HCT116 (cell line): ENCODE measurements at regions of chr9 and their contacts with region 1.

Region 1: DNA sequence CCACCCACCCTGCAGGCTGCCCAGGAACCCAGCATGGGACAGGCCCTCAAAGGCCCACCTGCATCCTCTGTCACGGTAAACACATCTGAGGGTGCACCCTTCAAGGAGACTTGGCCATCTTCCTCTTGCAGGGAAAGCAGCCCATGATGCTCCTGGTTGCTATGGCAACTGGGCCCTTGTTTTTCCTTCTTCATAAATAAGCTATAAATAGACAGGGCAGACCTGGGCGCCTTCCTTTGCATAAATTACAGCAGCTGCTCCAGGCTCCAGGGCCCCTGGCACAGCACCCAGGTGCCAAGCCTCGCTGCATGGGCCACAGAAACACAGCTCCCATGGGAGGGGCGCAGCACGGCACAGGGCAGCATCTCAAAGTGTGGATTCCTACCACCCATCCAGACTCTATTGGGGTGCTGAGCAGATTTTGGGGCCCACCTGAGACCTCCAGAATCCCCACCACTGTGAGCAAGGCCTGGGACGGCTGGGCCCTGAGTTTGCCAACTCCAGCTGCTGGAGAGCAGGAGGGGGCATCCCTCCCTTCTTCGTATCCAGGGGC is 5.8 kb upstream of the PSMB7 start:
- DNase-seq: no peak
- ATAC-seq: no peak
- H3K4me3 ChIP-seq: no peak overlapping the region
- H3K27ac ChIP-seq: no peak overlapping the region
- H3K4me1 ChIP-seq: peaks cover 0 to under 1% of the 10 kb centered on the region in 2 experiments; a peak in 3 of 4 replicates
- H3K27me3 ChIP-seq: no peaks in the 10 kb centered on the region; the same call in 1 of the 2 replicates
- CTCF ChIP-seq: no peak
- POLR2A ChIP-seq: no peak
- RAD21 ChIP-seq: no peak

Region 2: GRCh38 chr9:124297553-124297905 is 123.5 kb before region 1 on chr9:
- CTCF ChIA-PET with region 1: no interaction called
- POLR2A ChIA-PET with region 1: no interaction called
- RAD21 ChIA-PET with region 1: no interaction called
- intact Hi-C with region 1: no loop called
- DNase-seq: peak; percentile 72
- ATAC-seq: peak; percentile 85
- H3K4me3 ChIP-seq: peak overlapping the region in 1 of 2 experiments; percentile 29; a peak in 3 of 4 replicates
- H3K27ac ChIP-seq: peak overlapping the region; percentile 55; the same call in 1 of the 2 replicates
- H3K4me1 ChIP-seq: peaks cover 41 to 87% of the 10 kb centered on the region in 2 experiments
- H3K27me3 ChIP-seq: no peaks in the 10 kb centered on the region
- CTCF ChIP-seq: no peak
- POLR2A ChIP-seq: no peak
- RAD21 ChIP-seq: no peak

Region 3: GRCh38 chr9:124357721-124358361 is 63.2 kb before region 1 on chr9:
- CTCF ChIA-PET with region 1: no interaction called
- POLR2A ChIA-PET with region 1: no interaction called
- RAD21 ChIA-PET with region 1: no interaction called
- intact Hi-C with region 1: no loop called
- DNase-seq: no peak
- ATAC-seq: peak; percentile 48
- H3K4me3 ChIP-seq: no peak overlapping the region
- H3K27ac ChIP-seq: no peak overlapping the region
- H3K4me1 ChIP-seq: no peaks in the 10 kb centered on the region
- H3K27me3 ChIP-seq: no peaks in the 10 kb centered on the region
- CTCF ChIP-seq: peak; percentile 26 to 32 (median 26); a peak in 4 of 6 replicates
- POLR2A ChIP-seq: no peak
- RAD21 ChIP-seq: peak; percentile 53

Region 4: GRCh38 chr9:124480621-124480981 is 59.5 kb after region 1 on chr9:
- CTCF ChIA-PET with region 1: no interaction called
- POLR2A ChIA-PET with region 1: no interaction called
- RAD21 ChIA-PET with region 1: no interaction called
- intact Hi-C with region 1: loop called (anchors 2 kb)
- DNase-seq: peak; percentile 32
- ATAC-seq: peak; percentile 84
- H3K4me3 ChIP-seq: no peak overlapping the region
- H3K27ac ChIP-seq: no peak overlapping the region
- H3K4me1 ChIP-seq: peaks cover 9 to 26% of the 10 kb centered on the region in 2 experiments
- H3K27me3 ChIP-seq: no peaks in the 10 kb centered on the region
- CTCF ChIP-seq: peak; percentile 58 to 75 (median 68); a peak in 5 of 6 replicates
- POLR2A ChIP-seq: no peak
- RAD21 ChIP-seq: no peak

Region 5: DNA sequence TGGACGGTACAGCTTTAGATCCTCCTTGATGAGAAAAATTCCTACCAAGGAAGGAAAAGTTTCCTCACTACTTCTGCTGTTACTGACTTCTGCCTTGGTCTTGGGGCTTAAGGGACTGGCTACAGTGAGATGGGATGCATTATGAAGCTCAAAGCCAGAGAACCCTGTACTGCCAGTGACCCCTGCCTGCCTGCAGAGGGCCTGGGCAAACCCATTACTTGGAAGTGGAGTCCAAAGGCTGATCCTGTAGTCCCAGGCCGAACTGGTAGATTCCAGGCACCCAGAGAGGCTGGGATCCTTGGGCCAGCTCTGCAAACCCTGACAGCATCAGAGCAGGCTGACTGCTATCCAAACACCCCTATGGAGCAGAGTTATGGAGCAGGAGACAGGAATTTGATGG is 111.8 kb after region 1 on chr9:
- CTCF ChIA-PET with region 1: interaction called, 21 read pairs
- POLR2A ChIA-PET with region 1: no interaction called
- RAD21 ChIA-PET with region 1: interaction called in 1 of 2 experiments, 3 read pairs
- intact Hi-C with region 1: loop called (anchors 1 kb)
- DNase-seq: no peak
- ATAC-seq: peak; percentile 69
- H3K4me3 ChIP-seq: no peak overlapping the region
- H3K27ac ChIP-seq: no peak overlapping the region
- H3K4me1 ChIP-seq: peaks cover 2 to 11% of the 10 kb centered on the region in 2 experiments; a peak in 2 of 4 replicates
- H3K27me3 ChIP-seq: no peaks in the 10 kb centered on the region
- CTCF ChIP-seq: peak in 1 of 3 experiments; percentile 24; a peak in 1 of 6 replicates
- POLR2A ChIP-seq: no peak
- RAD21 ChIP-seq: no peak

Region 6: GRCh38 chr9:124537926-124538325 is 116.9 kb after region 1 on chr9:
- CTCF ChIA-PET with region 1: interaction called, 21 read pairs
- POLR2A ChIA-PET with region 1: no interaction called
- RAD21 ChIA-PET with region 1: interaction called in 1 of 2 experiments, 3 read pairs
- intact Hi-C with region 1: loop called (anchors 1 kb)
- DNase-seq: no peak
- ATAC-seq: no peak
- H3K4me3 ChIP-seq: no peak overlapping the region
- H3K27ac ChIP-seq: no peak overlapping the region
- H3K4me1 ChIP-seq: no peaks in the 10 kb centered on the region
- H3K27me3 ChIP-seq: no peaks in the 10 kb centered on the region
- CTCF ChIP-seq: no peak
- POLR2A ChIP-seq: no peak
- RAD21 ChIP-seq: no peak

Region 7: DNA sequence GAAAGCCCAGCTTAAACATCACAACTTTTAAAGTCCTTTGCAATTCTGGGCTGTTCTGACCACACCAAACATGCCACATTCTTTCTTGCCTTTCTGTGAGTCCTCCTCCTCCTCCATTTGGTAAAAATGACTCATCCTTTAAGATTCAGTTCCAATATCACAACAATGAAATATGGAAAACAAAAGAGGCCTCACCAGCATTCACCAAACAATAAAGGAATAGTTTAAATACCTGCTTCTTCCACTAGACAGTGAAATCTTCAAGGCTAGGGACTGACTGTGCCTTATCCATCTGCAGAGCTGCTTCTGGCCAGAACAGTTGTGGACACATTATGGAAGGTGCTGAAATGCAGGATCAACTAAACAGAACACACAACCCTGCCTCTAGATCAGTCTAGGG is 314.1 kb after region 1 on chr9:
- CTCF ChIA-PET with region 1: no interaction called
- POLR2A ChIA-PET with region 1: no interaction called
- RAD21 ChIA-PET with region 1: no interaction called
- intact Hi-C with region 1: no loop called
- DNase-seq: peak; percentile 59
- ATAC-seq: peak; percentile 80
- H3K4me3 ChIP-seq: peak overlapping the region in 1 of 2 experiments; percentile 8; a peak in 2 of 4 replicates
- H3K27ac ChIP-seq: peak overlapping the region; percentile 70
- H3K4me1 ChIP-seq: peaks cover 40 to 44% of the 10 kb centered on the region in 2 experiments
- H3K27me3 ChIP-seq: no peaks in the 10 kb centered on the region
- CTCF ChIP-seq: no peak
- POLR2A ChIP-seq: no peak
- RAD21 ChIP-seq: no peak

Region 8: GRCh38 chr9:125146247-125146646 is 725.2 kb after region 1 on chr9:
- CTCF ChIA-PET with region 1: no interaction called
- POLR2A ChIA-PET with region 1: no interaction called
- RAD21 ChIA-PET with region 1: no interaction called
- intact Hi-C with region 1: no loop called
- DNase-seq: no peak
- ATAC-seq: no peak
- H3K4me3 ChIP-seq: no peak overlapping the region
- H3K27ac ChIP-seq: no peak overlapping the region
- H3K4me1 ChIP-seq: peaks cover 7 to 12% of the 10 kb centered on the region in 2 experiments; a peak in 3 of 4 replicates
- H3K27me3 ChIP-seq: no peaks in the 10 kb centered on the region
- CTCF ChIP-seq: no peak
- POLR2A ChIP-seq: no peak
- RAD21 ChIP-seq: no peak